Activated CD4-positive, alpha-beta memory T cell treated with anti-CD3 and anti-CD28 coated beads for 36 hours (primary cell): ENCODE measurements at regions of chr16 and their contacts with region 1.

Region 1: GRCh38 chr16:46822270-46822669 is 8.7 kb downstream of the C16orf87 start:
- DNase-seq: peak; percentile 74
- H3K4me3 Mint-ChIP-seq: no peak overlapping the region
- H3K27ac Mint-ChIP-seq: no peak overlapping the region
- H3K4me1 Mint-ChIP-seq: peaks cover 32% of the 10 kb centered on the region
- H3K27me3 Mint-ChIP-seq: no peaks in the 10 kb centered on the region

Region 2: GRCh38 chr16:46789499-46790414 is 32.5 kb before region 1 on chr16:
- CTCF ChIA-PET with region 1: no interaction called
- POLR2A ChIA-PET with region 1: interaction called, 6 read pairs
- intact Hi-C with region 1: loop called (anchors 2 kb)
- DNase-seq: peak; percentile 88
- H3K4me3 Mint-ChIP-seq: peak overlapping the region; percentile 69
- H3K27ac Mint-ChIP-seq: peak overlapping the region; percentile 7
- H3K4me1 Mint-ChIP-seq: peaks cover 22% of the 10 kb centered on the region
- H3K27me3 Mint-ChIP-seq: no peaks in the 10 kb centered on the region

Region 3: GRCh38 chr16:46801428-46802049 is 20.7 kb before region 1 on chr16:
- CTCF ChIA-PET with region 1: interaction called, 5 read pairs
- POLR2A ChIA-PET with region 1: no interaction called
- intact Hi-C with region 1: loop called (anchors 2 kb)
- DNase-seq: no peak
- H3K4me3 Mint-ChIP-seq: no peak overlapping the region
- H3K27ac Mint-ChIP-seq: no peak overlapping the region
- H3K4me1 Mint-ChIP-seq: peaks cover 16% of the 10 kb centered on the region
- H3K27me3 Mint-ChIP-seq: no peaks in the 10 kb centered on the region

Region 4: DNA sequence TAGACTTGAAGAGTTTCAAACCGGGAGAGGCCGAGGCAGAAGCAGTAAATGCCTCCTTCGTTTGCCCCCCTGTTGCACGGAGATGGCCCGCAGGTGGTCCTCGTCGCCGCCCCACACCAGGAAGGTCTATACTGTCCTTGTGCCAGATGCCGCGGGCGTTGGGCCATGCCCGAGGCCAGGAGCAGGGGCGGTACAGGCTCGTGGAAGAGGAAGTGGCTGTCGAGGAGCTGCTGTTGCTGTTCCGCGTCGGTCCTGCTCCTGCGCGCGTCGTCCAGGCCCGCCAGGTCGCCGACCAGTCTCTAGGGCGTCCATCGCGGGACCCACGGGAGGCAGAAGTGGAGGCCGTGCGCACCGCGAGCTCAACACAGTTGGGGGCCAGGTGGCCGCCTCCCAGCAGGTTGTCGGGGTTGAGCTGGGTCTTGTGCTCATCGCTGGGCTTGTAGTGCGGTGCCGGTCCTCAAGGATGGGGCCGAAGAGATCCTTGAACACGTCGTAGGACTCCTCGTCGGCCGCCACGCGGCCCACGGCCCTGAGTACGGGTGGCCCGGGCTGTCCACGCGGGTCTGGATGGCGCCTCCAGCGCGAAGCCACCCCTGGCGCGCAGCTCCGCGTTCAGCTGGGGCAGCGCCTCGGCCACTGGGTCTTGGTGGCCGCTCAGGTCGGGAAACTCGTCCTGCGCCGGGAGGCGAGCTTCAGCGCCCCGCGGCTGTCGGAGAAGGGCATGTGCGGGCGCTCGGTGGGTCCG is 21.8 kb after region 1 on chr16:
- CTCF ChIA-PET with region 1: no interaction called
- POLR2A ChIA-PET with region 1: no interaction called
- intact Hi-C with region 1: no loop called
- DNase-seq: no peak
- H3K4me3 Mint-ChIP-seq: no peak overlapping the region
- H3K27ac Mint-ChIP-seq: no peak overlapping the region
- H3K4me1 Mint-ChIP-seq: no peaks in the 10 kb centered on the region
- H3K27me3 Mint-ChIP-seq: peaks cover 3% of the 10 kb centered on the region